ENCODE measurements at regions of chr4 and their contacts with region 1.

Region 1: DNA sequence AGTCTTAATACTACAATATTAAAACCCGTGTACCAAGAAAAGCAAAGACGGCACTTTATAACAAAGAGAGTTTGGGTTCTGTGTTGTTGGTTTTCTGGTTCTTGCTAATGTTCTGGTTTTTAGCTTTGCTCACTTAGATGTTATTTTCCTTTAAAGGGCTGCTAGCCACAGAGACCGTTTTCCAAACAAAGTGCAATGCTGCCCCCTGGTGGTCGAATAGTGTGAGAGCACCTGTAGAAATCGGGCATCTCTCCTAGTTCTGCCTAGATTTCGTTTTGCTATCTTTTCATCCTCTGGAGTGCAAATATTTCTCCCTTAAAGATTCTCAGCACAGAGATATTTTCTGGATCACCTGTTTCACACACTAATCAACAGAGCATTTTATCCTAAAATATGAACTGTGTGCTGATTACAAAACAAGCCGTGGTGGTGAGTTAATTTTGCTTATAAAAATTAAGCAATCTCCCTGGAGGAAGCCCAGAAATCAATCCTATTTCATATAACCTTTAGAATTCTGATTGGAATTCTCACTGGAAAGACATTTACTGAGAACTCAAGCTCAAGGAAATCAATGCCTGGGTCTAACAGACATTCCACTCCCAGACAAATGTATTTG is 334.5 kb upstream of the NOCT start:
- DNase-seq: peak; percentile 58
- ATAC-seq: peak; percentile 90
- H3K4me3 ChIP-seq: no peak overlapping the region
- H3K27ac ChIP-seq: no peak overlapping the region
- H3K4me1 ChIP-seq: no peaks in the 10 kb centered on the region
- H3K27me3 ChIP-seq: peaks cover 1 to 18% of the 10 kb centered on the region in 2 experiments; a peak in 4 of 5 replicates
- CTCF ChIP-seq: peak; percentile 83
- EP300 ChIP-seq: no peak
- POLR2A ChIP-seq: no peak
- RAD21 ChIP-seq: peak; percentile 80

Region 2: GRCh38 chr4:137749466-137749865 is 931.6 kb before region 1 on chr4:
- CTCF ChIA-PET with region 1: no interaction called
- POLR2A ChIA-PET with region 1: no interaction called
- in situ Hi-C with region 1: loop called (anchors 25 kb)
- intact Hi-C with region 1: no loop called
- DNase-seq: no peak
- ATAC-seq: no peak
- H3K4me3 ChIP-seq: no peak overlapping the region
- H3K27ac ChIP-seq: no peak overlapping the region
- H3K4me1 ChIP-seq: no peaks in the 10 kb centered on the region
- H3K27me3 ChIP-seq: no peaks in the 10 kb centered on the region
- CTCF ChIP-seq: no peak
- EP300 ChIP-seq: no peak
- POLR2A ChIP-seq: no peak
- RAD21 ChIP-seq: no peak

Region 3: DNA sequence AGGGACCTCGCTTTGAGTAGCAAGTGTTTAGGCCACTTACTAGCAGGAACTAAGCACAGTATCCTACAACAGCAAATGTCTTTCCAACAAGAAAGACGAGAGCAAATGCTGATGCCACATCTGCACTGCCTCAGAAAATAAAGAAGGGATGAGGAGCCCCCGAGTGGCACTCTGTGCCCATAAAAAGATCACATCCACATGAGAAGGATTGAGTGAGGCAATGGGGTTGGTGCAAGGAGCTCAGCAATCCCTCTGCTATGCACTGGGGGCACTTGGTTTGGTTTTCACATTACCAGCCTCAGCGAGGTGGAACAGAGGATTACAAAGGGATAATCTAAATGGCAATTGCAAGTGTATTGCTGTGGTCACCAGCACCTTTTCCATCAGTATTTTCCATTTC is 186.2 kb before region 1 on chr4:
- CTCF ChIA-PET with region 1: no interaction called
- POLR2A ChIA-PET with region 1: no interaction called
- in situ Hi-C with region 1: no loop called
- intact Hi-C with region 1: loop called (anchors 1 kb)
- DNase-seq: peak; percentile 12
- ATAC-seq: peak; percentile 95
- H3K4me3 ChIP-seq: no peak overlapping the region
- H3K27ac ChIP-seq: no peak overlapping the region
- H3K4me1 ChIP-seq: no peaks in the 10 kb centered on the region
- H3K27me3 ChIP-seq: no peaks in the 10 kb centered on the region
- CTCF ChIP-seq: peak; percentile 56
- EP300 ChIP-seq: no peak
- POLR2A ChIP-seq: no peak
- RAD21 ChIP-seq: no peak

Region 4: GRCh38 chr4:138669479-138670315 is 11.4 kb before region 1 on chr4:
- CTCF ChIA-PET with region 1: no interaction called
- POLR2A ChIA-PET with region 1: no interaction called
- in situ Hi-C with region 1: no loop called
- intact Hi-C with region 1: no loop called
- DNase-seq: no peak
- ATAC-seq: no peak
- H3K4me3 ChIP-seq: no peak overlapping the region
- H3K27ac ChIP-seq: no peak overlapping the region
- H3K4me1 ChIP-seq: peaks cover 19% of the 10 kb centered on the region
- H3K27me3 ChIP-seq: 0 out of 5 replicates have a peak, but pooled peaks cover 0 to 5% of the 10 kb centered on the region in 2 experiments
- CTCF ChIP-seq: no peak
- EP300 ChIP-seq: no peak
- POLR2A ChIP-seq: no peak
- RAD21 ChIP-seq: no peak

Region 5: DNA sequence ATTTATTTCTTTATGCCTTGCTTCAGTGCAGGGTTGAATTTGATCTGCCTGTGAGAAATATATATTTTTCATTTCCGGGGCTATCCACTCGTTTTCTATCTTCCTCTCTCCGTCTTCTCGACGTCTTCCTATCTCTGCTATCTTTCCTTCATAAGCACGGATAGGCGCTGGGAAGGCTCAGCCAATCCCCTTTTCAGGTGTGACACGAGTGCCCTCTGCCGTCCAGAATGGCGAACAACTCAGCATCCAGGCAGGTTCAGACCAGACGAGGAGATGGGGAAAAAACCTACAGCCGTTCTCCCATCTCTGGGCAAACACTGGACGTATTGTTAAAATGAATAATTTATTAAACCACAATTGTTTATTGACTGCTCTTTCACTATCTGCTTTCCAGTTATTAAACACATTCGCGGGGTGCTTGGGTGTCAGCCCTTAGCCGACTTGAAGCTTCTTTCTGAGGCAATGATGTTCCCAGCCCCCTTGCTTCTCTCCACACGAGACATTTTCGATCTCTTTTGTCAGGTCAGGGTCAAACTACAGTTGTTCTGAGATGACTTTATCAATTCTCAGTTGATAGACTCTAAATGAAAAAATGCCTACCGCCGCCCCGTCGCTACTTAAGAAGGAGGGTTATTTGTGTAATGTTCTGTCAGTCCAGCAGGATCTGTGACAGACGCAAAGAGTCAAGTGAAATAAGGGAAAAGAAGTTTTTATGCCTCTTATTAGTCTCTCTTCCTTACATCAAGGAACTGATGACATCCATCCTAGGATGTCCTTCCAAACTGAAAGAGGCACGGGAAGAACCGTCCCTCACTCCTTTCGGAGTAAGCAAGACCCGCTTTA is 238.2 kb after region 1 on chr4:
- CTCF ChIA-PET with region 1: no interaction called
- POLR2A ChIA-PET with region 1: no interaction called
- in situ Hi-C with region 1: no loop called
- intact Hi-C with region 1: loop called (anchors 5 kb)
- DNase-seq: peak; percentile 49
- ATAC-seq: peak; percentile 99
- H3K4me3 ChIP-seq: no peak overlapping the region
- H3K27ac ChIP-seq: no peak overlapping the region
- H3K4me1 ChIP-seq: no peaks in the 10 kb centered on the region
- H3K27me3 ChIP-seq: no peaks in the 10 kb centered on the region
- CTCF ChIP-seq: peak; percentile 87
- EP300 ChIP-seq: no peak
- POLR2A ChIP-seq: no peak
- RAD21 ChIP-seq: peak; percentile 63

Measured in HepG2 (cell line).